BJ (cell line): ENCODE measurements at regions of chr16 and their contacts with region 1.

Region 1: DNA sequence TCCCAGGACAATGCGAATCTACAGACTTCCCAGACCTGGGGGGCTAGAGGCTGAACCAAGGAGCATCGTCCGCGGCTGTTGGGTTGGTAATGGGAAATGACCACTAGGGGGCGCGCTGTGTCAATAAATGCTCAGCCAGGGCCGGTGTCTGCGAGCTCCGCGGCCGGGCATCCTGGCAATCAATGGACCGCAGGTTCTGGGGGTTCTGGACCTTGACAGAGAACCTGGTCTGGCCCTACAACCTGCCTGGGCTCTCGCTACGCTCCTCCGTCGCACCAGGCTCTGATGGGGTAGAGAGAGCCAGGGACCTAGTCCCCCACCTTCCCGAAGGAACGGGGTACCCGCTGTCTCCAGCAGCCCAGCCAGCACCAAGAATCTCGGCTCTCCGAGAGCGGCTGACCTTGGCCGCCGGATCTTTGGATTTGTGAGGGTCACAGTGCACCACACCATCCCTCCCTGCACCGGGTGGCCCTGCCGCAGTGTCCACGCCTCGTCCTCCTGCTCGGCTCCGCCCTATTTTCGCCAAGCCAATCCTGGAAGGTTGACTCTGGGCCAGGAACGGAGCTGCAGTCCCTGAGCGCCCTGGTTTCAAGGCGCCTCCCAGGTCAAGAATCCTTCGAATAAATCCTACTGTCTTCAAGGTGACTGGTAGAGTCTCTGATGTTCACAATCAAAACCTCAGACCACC is 20.4 kb upstream of the BEAN1 start:
- DNase-seq: no peak
- H3K4me3 ChIP-seq: peak overlapping the region; percentile 53
- H3K27me3 ChIP-seq: peaks cover 9% of the 10 kb centered on the region
- CTCF ChIP-seq: peak; percentile 80

Region 2: GRCh38 chr16:66270333-66270927 is 136.2 kb before region 1 on chr16:
- CTCF ChIA-PET with region 1: no interaction called
- POLR2A ChIA-PET with region 1: no interaction called
- DNase-seq: no peak
- H3K4me3 ChIP-seq: no peak overlapping the region
- H3K27me3 ChIP-seq: no peaks in the 10 kb centered on the region
- CTCF ChIP-seq: peak; percentile 61

Region 3: DNA sequence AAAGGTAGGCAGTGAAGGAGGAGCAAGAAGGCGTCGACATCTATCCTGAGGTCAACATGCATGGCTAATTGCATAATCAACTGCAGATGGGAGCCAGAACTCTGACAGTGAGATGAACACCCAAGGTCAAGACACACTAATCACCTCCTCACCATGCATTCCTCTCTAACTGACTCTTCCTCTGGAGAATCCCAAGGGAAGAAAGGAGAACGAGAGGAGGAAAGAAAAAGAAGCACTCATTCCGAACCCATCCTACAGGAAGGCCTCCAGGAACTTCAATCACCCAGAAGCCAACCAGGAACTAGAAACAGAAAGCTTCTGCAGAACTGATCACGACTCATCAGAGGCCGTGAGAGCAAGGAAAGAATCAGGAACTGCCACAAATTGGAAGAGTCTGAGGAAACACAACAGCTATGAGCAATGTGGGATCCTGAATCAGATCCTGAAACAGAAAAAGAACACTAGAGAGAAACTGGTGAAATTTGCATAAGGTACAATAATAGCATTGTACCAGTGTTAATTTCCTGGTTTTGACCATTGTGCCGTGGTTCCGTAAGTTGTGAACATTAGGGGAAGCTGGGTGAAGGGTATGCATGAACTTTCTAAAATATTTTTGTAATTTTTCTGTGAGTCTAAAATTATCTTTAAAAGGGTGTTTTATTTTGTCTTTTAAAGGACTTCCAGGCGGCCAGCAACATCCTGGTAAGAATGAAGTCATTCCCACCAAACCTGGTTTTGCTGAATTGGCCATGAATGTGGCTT is 10.4 kb after region 1 on chr16:
- CTCF ChIA-PET with region 1: interaction called, 16 read pairs
- POLR2A ChIA-PET with region 1: no interaction called
- DNase-seq: no peak
- H3K4me3 ChIP-seq: no peak overlapping the region
- H3K27me3 ChIP-seq: no peaks in the 10 kb centered on the region
- CTCF ChIP-seq: no peak

Region 4: GRCh38 chr16:66474750-66475199 is 68.1 kb after region 1 on chr16:
- CTCF ChIA-PET with region 1: interaction called, 34 read pairs
- POLR2A ChIA-PET with region 1: no interaction called
- DNase-seq: no peak
- H3K4me3 ChIP-seq: no peak overlapping the region
- H3K27me3 ChIP-seq: peaks cover 8% of the 10 kb centered on the region; the same call in 1 of the 2 replicates
- CTCF ChIP-seq: no peak

Region 5: GRCh38 chr16:66515596-66516510 is 109.2 kb after region 1 on chr16:
- CTCF ChIA-PET with region 1: interaction called, 16 read pairs
- POLR2A ChIA-PET with region 1: no interaction called
- DNase-seq: no peak
- H3K4me3 ChIP-seq: no peak overlapping the region
- H3K27me3 ChIP-seq: no peaks in the 10 kb centered on the region
- CTCF ChIP-seq: peak; percentile 61

Region 6: DNA sequence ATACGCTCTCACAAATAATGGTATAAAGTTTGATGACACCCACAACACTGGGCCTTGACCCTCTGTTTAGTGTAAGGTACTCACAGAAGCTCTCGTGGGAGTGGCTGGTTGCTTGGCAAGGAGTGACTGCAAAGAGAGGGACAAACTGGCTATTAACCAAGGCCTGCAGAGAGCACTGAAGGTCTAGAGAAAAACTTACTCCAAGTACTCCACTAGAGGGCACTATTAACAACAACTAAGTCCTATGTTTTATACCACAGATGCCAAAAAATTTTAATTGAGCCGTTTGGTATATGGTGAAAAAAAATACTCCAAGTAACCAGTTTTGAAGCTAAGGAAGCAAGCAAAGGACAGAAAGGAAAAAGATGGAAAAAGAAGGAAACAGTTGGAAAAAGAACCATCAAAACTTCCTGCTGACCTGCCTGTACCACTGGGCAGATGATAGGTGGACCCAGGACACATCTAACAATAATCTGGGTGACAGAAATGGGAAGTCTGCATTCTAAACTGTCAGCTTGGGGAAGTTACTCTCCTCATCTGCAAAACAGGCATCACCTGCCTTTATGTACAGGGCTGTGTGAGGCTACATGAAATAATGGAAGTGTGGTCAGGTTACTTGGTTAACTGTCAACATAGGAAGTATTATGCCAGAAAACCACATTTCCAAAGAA is 321.6 kb after region 1 on chr16:
- CTCF ChIA-PET with region 1: interaction called, 11 read pairs
- POLR2A ChIA-PET with region 1: no interaction called
- DNase-seq: no peak
- H3K4me3 ChIP-seq: no peak overlapping the region
- H3K27me3 ChIP-seq: no peaks in the 10 kb centered on the region
- CTCF ChIP-seq: peak; percentile 60